Activated CD4-positive, alpha-beta memory T cell treated with anti-CD3 and anti-CD28 coated beads for 36 hours (primary cell): ENCODE measurements at regions of chr12 and their contacts with region 1.

Region 1: GRCh38 chr12:1795785-1796514 is 24.4 kb upstream of the LRTM2 start:
- DNase-seq: peak; percentile 96
- H3K4me3 Mint-ChIP-seq: peak overlapping the region; percentile 82
- H3K27ac Mint-ChIP-seq: peak overlapping the region; percentile 92
- H3K4me1 Mint-ChIP-seq: peaks cover 15% of the 10 kb centered on the region
- H3K27me3 Mint-ChIP-seq: no peaks in the 10 kb centered on the region

Region 2: DNA sequence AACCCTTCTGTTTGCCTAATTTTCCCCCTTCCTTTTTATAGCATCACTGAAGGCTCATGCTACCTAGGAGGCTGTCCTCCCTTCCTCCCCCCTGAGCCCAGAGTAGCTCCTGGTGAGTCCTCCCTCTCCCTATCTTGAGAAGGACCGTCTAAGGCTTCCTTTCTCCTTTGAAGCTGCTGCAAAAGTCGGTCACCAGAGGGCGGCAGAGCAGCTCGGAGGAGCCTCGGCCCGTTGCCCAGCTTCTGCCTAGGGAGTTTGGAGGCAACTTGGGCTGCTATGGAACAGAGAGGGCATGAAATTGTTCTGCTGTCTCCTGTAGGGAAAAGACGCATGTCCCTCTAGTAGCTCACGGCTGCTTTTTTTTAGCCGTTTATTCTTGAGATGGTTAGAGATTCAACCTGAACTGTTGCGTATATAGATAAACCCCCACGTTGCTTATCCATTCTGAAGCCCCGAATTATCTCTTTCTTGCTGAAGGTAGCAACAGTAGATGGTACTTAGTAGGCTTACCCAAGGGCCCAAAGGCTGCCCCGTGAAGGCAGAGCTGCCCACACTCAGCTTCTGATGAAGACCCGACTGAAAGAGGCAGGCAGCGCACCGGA is 161.3 kb before region 1 on chr12:
- CTCF ChIA-PET with region 1: interaction called, 55 read pairs
- POLR2A ChIA-PET with region 1: no interaction called
- intact Hi-C with region 1: loop called (anchors 1 kb)
- DNase-seq: peak; percentile 75
- H3K4me3 Mint-ChIP-seq: no peak overlapping the region
- H3K27ac Mint-ChIP-seq: no peak overlapping the region
- H3K4me1 Mint-ChIP-seq: peaks cover 9% of the 10 kb centered on the region
- H3K27me3 Mint-ChIP-seq: peaks cover 48% of the 10 kb centered on the region

Region 3: GRCh38 chr12:1661553-1662335 is 134.2 kb before region 1 on chr12:
- CTCF ChIA-PET with region 1: interaction called, 498 read pairs
- POLR2A ChIA-PET with region 1: no interaction called
- intact Hi-C with region 1: loop called (anchors 2 kb)
- DNase-seq: peak; percentile 91
- H3K4me3 Mint-ChIP-seq: peak overlapping the region; percentile 73
- H3K27ac Mint-ChIP-seq: peak overlapping the region; percentile 64
- H3K4me1 Mint-ChIP-seq: peaks cover 29% of the 10 kb centered on the region
- H3K27me3 Mint-ChIP-seq: no peaks in the 10 kb centered on the region

Region 4: GRCh38 chr12:1732914-1733313 is 63.0 kb before region 1 on chr12:
- CTCF ChIA-PET with region 1: no interaction called
- POLR2A ChIA-PET with region 1: no interaction called
- intact Hi-C with region 1: no loop called
- DNase-seq: no peak
- H3K4me3 Mint-ChIP-seq: no peak overlapping the region
- H3K27ac Mint-ChIP-seq: no peak overlapping the region
- H3K4me1 Mint-ChIP-seq: peaks cover 17% of the 10 kb centered on the region
- H3K27me3 Mint-ChIP-seq: no peaks in the 10 kb centered on the region

Region 5: DNA sequence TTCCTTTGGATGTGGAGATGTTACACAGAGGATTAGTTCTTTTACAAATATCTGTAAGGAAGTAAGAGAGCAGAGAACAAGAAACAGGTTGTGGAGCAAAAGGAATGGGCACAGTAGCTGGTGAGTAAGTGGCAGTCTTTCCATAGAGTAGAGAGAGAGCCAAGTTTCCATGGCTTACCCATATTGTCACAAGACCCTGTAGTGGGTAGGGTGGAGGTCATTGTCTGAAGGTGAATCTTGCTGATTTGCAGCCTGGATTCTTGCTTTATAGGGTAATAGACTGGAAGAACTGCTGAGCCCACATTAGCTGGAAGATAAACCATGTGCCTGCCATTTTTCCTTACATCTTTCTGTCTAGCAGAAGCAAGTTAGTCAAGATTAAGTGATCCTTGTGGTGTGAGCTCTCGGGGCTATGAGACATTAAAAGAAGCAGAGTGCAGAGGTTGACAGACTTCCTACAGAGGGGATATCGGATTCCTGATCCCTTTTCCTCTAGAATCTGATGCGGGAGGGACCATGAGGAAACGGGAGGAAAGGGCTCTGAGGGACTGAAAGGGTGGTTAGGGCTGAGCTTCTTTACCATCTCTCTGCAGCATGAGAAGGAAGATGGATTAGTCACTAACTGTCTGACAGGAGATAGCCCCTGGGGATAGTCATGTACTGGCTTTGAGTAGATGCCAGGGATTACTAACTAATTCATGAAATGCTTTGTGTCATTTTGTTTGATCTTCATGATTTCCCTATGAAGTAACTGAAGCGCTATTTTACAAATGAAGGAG is 19.6 kb before region 1 on chr12:
- CTCF ChIA-PET with region 1: interaction called, 10 read pairs
- POLR2A ChIA-PET with region 1: no interaction called
- intact Hi-C with region 1: no loop called
- DNase-seq: no peak
- H3K4me3 Mint-ChIP-seq: no peak overlapping the region
- H3K27ac Mint-ChIP-seq: no peak overlapping the region
- H3K4me1 Mint-ChIP-seq: no peaks in the 10 kb centered on the region
- H3K27me3 Mint-ChIP-seq: no peaks in the 10 kb centered on the region

Region 6: GRCh38 chr12:1907652-1908611 is 112.0 kb after region 1 on chr12:
- CTCF ChIA-PET with region 1: no interaction called
- POLR2A ChIA-PET with region 1: no interaction called
- intact Hi-C with region 1: no loop called
- DNase-seq: peak; percentile 37
- H3K4me3 Mint-ChIP-seq: peak overlapping the region; percentile 54
- H3K27ac Mint-ChIP-seq: no peak overlapping the region
- H3K4me1 Mint-ChIP-seq: peaks cover 5% of the 10 kb centered on the region
- H3K27me3 Mint-ChIP-seq: peaks cover 8% of the 10 kb centered on the region

Region 7: DNA sequence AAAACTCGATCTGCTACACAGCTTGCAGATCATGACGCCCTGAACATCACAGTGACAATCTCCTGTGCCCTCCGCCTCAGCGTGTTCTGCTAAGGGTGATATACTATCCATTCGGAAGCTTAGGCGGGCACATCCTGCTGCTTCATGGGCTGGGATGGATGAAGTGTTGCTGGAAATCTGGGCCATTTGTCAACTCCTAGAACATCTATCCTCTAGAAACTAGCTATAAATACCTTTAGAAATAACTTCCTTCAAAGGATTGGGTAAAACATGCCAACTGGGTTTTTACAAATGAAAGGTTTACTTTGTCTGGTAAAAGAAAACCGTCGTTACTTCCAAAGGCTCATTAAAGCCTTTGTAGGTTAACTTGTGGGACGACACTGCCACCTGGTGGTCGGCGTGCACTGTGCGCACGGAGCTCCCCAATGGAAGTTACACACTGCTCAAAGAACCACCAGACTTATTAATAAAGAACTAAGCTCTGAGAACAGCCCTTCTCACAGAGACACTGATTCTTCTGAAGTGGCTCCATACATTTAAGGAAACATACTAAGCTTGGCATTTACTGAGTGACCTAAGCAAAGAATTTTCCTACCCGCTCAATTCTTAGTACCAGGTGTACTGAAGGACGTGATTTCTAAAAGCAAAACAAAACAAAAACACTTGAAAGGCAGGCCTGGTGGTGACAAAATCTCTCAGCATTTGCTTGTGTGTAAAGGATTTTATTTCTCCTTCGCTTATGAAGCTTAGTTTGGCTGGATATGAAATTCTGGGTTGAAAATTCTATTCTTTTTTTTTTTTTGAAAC is 144.1 kb after region 1 on chr12:
- CTCF ChIA-PET with region 1: interaction called, 91 read pairs
- POLR2A ChIA-PET with region 1: interaction called, 9 read pairs
- intact Hi-C with region 1: loop called (anchors 1 kb)
- DNase-seq: peak; percentile 91
- H3K4me3 Mint-ChIP-seq: no peak overlapping the region
- H3K27ac Mint-ChIP-seq: no peak overlapping the region
- H3K4me1 Mint-ChIP-seq: peaks cover 4% of the 10 kb centered on the region
- H3K27me3 Mint-ChIP-seq: no peaks in the 10 kb centered on the region

Region 8: GRCh38 chr12:2291182-2291832 is 495.4 kb after region 1 on chr12:
- CTCF ChIA-PET with region 1: no interaction called
- POLR2A ChIA-PET with region 1: no interaction called
- intact Hi-C with region 1: loop called (anchors 5 kb)
- DNase-seq: peak; percentile 56
- H3K4me3 Mint-ChIP-seq: no peak overlapping the region
- H3K27ac Mint-ChIP-seq: no peak overlapping the region
- H3K4me1 Mint-ChIP-seq: peaks cover 6% of the 10 kb centered on the region
- H3K27me3 Mint-ChIP-seq: peaks cover 11% of the 10 kb centered on the region